ENCODE measurements at regions of chr14 and their contacts with region 1.

Region 1: GRCh38 chr14:100850841-100851585 is 25.1 kb downstream of the MEG3 start:
- DNase-seq: peak; percentile 94
- H3K4me3 ChIP-seq: no peak overlapping the region
- H3K27ac ChIP-seq: no peak overlapping the region
- H3K4me1 ChIP-seq: peaks cover 4% of the 10 kb centered on the region
- H3K27me3 ChIP-seq: no peaks in the 10 kb centered on the region
- CTCF ChIP-seq: peak; percentile 93

Region 2: DNA sequence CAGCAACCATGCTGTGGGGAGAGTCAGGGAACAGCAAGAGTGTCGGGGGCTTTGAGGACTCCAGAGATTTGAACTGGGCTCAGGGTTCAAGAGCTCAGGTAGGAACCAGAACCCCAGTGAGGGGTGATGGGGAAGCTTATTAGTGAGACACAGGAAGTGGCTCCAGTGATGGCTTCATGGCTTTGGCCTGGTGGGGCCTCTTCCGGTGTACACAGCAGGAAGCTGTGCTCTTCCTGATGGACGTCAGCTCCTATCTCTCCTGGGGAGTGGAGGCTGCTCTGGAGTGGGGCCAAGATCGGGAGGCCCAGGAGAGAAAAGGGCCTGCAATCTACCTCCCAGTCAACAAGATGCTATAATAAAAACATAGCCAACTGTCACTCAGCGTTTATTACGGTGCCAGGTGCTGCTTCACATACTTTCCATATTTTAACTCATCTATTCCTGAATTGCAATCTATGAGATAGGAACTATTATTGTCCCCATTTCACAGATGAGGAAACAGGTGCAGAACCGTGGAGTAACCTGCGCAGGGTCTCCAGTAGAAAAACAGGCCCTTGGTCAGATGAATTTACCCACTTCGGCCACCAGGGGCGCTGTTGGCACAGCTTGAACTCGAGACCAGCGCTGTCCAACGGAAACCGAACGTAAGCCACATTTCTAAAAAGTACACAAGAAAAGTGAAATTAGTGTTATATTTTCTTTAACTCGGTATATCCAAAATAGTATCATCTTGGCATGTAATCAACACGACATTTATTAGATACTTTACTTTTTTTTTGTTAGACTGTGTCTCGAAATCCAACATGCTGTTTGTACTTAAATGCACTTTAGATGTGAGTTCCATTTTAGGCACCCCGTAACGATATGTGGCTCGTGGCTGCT is 187.9 kb before region 1 on chr14:
- intact Hi-C with region 1: loop called (anchors 10 kb)
- DNase-seq: peak; percentile 80
- H3K4me3 ChIP-seq: no peak overlapping the region
- H3K27ac ChIP-seq: no peak overlapping the region
- H3K4me1 ChIP-seq: peaks cover 7% of the 10 kb centered on the region
- H3K27me3 ChIP-seq: no peaks in the 10 kb centered on the region
- CTCF ChIP-seq: peak; percentile 97

Region 3: GRCh38 chr14:100900837-100901390 is 49.9 kb after region 1 on chr14:
- intact Hi-C with region 1: loop called (anchors 5 kb)
- DNase-seq: peak; percentile 64
- H3K4me3 ChIP-seq: no peak overlapping the region
- H3K27ac ChIP-seq: no peak overlapping the region
- H3K4me1 ChIP-seq: peaks cover 4% of the 10 kb centered on the region
- H3K27me3 ChIP-seq: peaks cover 10% of the 10 kb centered on the region
- CTCF ChIP-seq: no peak

Region 4: DNA sequence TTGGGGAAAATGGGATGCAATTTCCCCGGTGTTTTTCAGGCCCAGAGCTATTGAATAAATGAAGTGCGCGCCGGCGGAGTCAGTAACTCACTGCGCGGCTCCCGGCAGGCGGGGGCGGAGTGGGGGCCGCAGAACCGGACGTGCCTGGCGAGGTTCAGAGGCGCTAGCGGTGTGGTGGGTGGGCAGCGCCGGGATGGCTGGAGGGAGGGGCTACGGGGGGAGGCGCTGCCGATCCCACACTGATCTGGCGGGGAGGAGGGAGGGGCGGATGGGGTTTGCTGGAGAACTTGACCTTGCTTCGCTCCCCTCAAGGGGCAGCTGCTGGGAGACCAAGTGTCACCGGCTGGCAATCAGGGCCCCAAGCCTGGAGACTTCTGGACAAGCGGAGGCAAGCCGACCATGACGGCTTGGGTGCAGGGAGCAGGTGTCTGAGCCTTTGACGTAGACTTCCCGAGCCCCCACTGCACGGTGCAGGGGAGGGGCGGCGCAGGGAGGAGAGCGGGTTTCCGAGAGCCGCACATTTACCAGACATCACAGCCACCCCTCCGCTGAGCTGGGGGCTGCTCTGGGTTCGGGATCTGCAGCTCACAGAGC is 226.6 kb after region 1 on chr14:
- intact Hi-C with region 1: no loop called
- DNase-seq: peak; percentile 9
- H3K4me3 ChIP-seq: no peak overlapping the region
- H3K27ac ChIP-seq: no peak overlapping the region
- H3K4me1 ChIP-seq: no peaks in the 10 kb centered on the region
- H3K27me3 ChIP-seq: peaks cover 23% of the 10 kb centered on the region
- CTCF ChIP-seq: no peak

Region 5: DNA sequence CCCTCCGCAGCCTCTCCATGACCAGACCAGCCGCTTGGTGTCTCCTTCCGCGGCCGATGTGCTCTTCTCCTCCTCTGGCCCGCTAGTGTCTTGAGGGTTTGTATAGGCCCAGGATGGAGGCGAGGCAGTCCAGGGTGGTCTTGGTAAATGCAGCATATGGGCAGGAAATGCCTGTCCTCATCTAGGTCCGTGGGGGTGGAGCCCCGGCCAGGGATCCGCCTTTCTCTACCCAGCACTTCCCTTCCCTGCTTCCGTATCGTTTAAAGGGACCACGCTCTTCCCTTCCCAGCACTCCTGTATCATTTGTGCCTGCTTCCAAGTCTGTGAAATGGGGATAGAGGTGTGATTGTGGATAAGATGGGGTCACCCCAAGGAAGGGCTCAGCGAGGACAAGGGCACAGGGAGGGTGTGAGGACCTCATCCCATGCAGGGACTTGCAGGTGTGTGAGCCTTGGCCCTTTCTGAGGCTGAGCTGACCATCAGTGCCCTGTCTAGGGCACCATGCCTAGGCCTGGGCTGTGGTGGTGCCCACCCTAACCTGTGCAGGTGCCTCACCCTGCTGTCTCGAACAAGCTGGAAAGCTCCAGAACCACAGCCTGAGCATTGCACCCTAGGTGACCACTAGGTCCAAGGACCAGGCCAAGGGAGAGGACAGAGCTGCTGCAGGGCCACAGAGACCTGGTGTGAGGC is 379.3 kb after region 1 on chr14:
- intact Hi-C with region 1: loop called (anchors 5 kb)
- DNase-seq: no peak
- H3K4me3 ChIP-seq: no peak overlapping the region
- H3K27ac ChIP-seq: no peak overlapping the region
- H3K4me1 ChIP-seq: no peaks in the 10 kb centered on the region
- H3K27me3 ChIP-seq: no peaks in the 10 kb centered on the region
- CTCF ChIP-seq: no peak

Region 6: DNA sequence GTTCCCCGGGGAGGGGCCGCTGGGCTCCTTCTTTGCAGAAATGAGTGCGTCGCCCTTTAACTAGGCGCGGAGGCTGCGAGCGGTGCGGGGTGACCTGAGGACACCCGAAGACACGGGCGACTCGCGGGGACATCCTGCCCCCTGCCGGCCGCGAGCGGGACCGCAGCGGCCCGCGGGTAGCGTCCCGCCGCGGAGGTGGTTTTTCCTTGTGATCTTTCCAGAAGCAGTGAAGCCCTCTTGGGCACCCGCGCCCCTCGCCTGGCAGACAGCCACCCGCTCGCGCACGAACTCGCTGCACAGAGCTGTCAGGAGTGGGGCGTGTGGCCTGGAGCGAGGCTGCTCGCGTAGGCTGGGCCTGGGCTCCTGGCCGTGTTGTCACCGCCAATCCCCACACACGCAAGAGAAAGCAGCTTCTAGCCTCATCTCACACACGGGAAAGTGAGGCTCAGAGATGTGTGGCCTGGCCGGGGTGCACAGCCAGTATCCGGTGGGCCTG is 777.5 kb after region 1 on chr14:
- intact Hi-C with region 1: loop called (anchors 2 kb)
- DNase-seq: peak; percentile 73
- H3K4me3 ChIP-seq: no peak overlapping the region
- H3K27ac ChIP-seq: no peak overlapping the region
- H3K4me1 ChIP-seq: peaks cover 8% of the 10 kb centered on the region
- H3K27me3 ChIP-seq: no peaks in the 10 kb centered on the region
- CTCF ChIP-seq: peak; percentile 100

Region 7: DNA sequence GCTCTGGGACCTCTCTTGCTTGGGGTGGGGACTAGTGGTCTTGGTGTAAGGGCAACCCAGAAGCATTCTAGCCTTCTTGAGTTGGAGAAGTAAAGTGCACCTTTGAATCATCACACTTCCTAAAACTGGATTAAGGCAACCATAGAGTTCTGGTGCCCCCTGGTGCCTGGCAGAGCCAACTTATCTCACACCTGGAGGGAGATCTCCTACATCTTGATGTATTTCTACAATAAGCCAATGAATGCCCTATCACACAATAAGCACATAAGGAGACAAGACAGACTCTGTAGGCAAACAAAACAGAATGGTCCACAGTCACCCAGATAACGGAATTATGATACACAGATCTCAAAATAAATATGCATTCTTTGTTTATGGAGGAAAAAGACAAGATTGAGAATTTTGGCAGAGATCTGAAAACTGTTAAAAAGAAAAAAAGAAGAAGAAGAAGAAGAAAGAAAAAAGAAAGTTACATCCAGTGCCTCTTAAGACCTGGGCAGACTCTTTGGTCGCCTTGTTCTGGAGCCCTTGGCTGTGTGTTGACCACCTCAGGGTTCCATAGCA is 814.6 kb after region 1 on chr14:
- intact Hi-C with region 1: loop called (anchors 5 kb)
- DNase-seq: peak; percentile 46
- H3K4me3 ChIP-seq: no peak overlapping the region
- H3K27ac ChIP-seq: no peak overlapping the region
- H3K4me1 ChIP-seq: no peaks in the 10 kb centered on the region
- H3K27me3 ChIP-seq: no peaks in the 10 kb centered on the region
- CTCF ChIP-seq: peak; percentile 42